Tibial artery (tissue), 4 donors: ENCODE measurements at regions of chrX and their contacts with region 1.

Region 1: DNA sequence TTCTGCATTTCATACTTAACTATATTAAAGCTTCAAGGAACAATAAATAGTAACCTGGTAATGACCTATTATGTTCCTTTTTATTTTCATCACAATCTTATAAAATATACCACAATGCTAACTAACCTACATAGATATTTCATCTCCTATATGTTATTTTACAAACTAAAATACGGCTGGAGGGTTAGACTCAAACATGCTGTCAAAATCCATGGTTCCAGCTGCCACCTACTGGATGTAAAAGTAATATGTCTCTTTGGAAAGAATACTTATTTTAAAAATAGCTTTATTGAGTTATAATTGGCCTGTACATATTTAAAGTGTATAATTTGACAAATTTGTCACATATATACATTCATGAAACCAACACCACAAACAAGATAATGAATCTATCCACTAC is 15.0 kb downstream of the RGN start:
- DNase-seq: no peak
- H3K4me3 ChIP-seq: no peak overlapping the region
- H3K27ac ChIP-seq: no peak overlapping the region
- H3K4me1 ChIP-seq: no peaks in the 10 kb centered on the region
- H3K27me3 ChIP-seq: no peaks in the 10 kb centered on the region
- CTCF ChIP-seq: peak; percentile 31 to 41

Region 2: GRCh38 chrX:46758906-46759644 is 334.2 kb before region 1 on chrX and contains the start of gene SLC9A7:
- intact Hi-C with region 1: loop called (anchors 5 kb)
- DNase-seq: peak; percentile 66 to 80
- H3K4me3 ChIP-seq: peak within 1 kb of the TSS; percentile 51 to 60
- H3K27ac ChIP-seq: peak within 1 kb of the TSS; percentile 22
- H3K4me1 ChIP-seq: peaks cover 0 to 8% (median 3%) of the 10 kb centered on the region in 4 donors
- H3K27me3 ChIP-seq: no peaks in the 10 kb centered on the region
- CTCF ChIP-seq: peak; percentile 80 to 83

Region 3: DNA sequence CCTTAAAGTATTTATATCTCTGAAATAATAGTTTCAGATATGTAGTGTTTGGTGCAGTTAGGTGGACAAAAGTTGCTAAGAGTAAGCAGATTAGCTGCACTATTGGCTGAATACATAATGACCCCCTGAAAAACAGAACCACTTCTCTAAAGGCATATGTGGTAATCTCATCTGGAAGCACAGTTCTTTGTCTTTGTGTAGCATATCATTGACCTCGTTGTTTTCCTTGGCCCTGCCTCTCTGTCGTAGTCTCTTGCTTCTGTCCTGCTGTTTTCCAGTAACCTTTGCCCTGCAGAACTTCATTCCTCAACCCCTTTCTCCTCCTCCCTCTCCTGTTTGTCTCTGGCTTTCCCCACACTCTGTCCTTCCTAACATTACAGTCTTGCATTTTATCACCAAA is 139.7 kb before region 1 on chrX:
- intact Hi-C with region 1: no loop called
- DNase-seq: no peak
- H3K4me3 ChIP-seq: no peak overlapping the region
- H3K27ac ChIP-seq: no peak overlapping the region
- H3K4me1 ChIP-seq: peaks cover 0 to 19% (median 3%) of the 10 kb centered on the region in 4 donors
- H3K27me3 ChIP-seq: no peaks in the 10 kb centered on the region
- CTCF ChIP-seq: no peak

Region 4: GRCh38 chrX:47129157-47129898 is 36.1 kb after region 1 on chrX:
- intact Hi-C with region 1: no loop called
- DNase-seq: peak; percentile 94 to 96
- H3K4me3 ChIP-seq: peak overlapping the region; percentile 57 to 59
- H3K27ac ChIP-seq: peak overlapping the region; percentile 82
- H3K4me1 ChIP-seq: peaks cover 0 to 6% (median 0%) of the 10 kb centered on the region in 4 donors
- H3K27me3 ChIP-seq: no peaks in the 10 kb centered on the region
- CTCF ChIP-seq: no peak